SK-N-SH (cell line): ENCODE measurements at regions of chr2 and their contacts with region 1.

Region 1: DNA sequence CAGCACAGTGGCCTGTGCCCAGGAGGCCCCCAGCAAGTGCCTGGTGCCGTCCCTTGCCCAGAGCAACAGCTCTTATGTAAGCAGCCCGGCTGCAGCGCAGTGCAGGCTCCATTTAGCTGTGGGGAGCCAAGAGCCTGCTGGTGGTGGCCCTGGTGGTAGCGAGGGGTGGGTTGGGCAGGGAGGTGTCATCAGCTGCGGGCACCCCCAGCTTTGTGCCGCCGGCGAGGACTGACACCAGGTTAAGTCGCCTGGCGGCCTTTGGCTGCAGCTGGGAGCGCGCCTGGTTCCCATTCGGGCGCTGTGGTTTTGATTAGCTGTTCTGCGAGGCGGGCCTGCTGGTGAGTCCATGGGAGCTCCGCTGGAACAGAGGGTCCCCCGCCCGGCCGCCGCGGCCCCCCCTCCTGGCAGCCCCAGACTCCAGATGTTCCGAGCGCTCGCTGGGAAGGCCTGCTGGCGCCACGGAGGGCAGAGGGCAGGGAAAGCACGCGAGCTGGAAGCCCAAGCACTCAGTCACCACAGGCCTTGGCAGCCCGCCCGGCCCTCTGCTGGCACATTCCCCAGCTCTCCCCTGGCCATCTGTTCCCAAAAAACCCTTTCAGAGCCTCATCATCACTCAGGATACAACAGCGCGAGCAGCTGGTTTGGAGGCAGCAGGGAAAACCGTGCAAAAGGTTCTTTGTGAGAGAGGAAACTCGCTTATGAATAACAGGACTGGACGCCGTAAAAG is 18.4 kb downstream of the ATOH8 start:
- DNase-seq: peak; percentile 96
- H3K4me3 ChIP-seq: peak overlapping the region; percentile 28 to 55
- H3K27ac ChIP-seq: peak overlapping the region; percentile 96 to 99
- H3K4me1 ChIP-seq: peaks cover 63 to 70% of the 10 kb centered on the region in 2 experiments
- H3K27me3 ChIP-seq: no peaks in the 10 kb centered on the region
- CTCF ChIP-seq: peak; percentile 46
- EP300 ChIP-seq: peak; percentile 92 to 100
- RAD21 ChIP-seq: peak; percentile 53

Region 2: DNA sequence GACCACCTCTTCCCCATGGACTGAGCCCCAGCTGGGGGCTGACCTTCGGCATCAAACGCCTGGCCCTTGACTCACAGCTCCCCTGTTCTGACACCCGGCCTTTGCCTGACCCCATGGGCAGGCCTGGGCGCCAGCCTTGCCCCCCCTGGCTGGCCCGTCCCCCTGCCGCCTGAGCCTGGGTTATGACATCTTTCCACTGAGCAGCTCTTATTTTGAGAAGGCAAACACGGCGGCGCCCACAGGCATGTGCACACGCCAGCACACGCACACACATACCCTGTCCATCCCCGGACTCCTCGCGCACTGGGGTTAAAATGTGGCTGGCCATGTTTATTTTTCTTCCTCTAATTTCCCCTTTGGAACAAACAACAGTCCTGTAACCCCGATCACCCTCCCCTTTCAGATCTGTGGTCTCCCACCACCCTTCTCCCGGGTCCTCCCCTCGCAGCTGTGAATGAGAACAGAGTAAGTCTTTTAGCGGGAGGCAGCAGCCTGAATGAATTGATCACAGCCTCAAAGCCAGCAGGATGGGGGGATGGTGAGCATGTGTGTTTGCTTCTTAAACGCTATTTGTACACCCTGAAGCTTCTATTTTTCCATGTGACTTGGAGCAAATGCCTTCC is 30.2 kb before region 1 on chr2:
- CTCF ChIA-PET with region 1: interaction called, 10 read pairs
- POLR2A ChIA-PET with region 1: interaction called, 3 read pairs
- DNase-seq: peak; percentile 77
- H3K4me3 ChIP-seq: no peak overlapping the region
- H3K27ac ChIP-seq: peak overlapping the region; percentile 95 to 96
- H3K4me1 ChIP-seq: peaks cover 53 to 54% of the 10 kb centered on the region in 2 experiments
- H3K27me3 ChIP-seq: no peaks in the 10 kb centered on the region
- CTCF ChIP-seq: no peak
- EP300 ChIP-seq: peak in 1 of 2 experiments; percentile 81; a peak in 1 of 4 replicates
- RAD21 ChIP-seq: no peak

Region 3: DNA sequence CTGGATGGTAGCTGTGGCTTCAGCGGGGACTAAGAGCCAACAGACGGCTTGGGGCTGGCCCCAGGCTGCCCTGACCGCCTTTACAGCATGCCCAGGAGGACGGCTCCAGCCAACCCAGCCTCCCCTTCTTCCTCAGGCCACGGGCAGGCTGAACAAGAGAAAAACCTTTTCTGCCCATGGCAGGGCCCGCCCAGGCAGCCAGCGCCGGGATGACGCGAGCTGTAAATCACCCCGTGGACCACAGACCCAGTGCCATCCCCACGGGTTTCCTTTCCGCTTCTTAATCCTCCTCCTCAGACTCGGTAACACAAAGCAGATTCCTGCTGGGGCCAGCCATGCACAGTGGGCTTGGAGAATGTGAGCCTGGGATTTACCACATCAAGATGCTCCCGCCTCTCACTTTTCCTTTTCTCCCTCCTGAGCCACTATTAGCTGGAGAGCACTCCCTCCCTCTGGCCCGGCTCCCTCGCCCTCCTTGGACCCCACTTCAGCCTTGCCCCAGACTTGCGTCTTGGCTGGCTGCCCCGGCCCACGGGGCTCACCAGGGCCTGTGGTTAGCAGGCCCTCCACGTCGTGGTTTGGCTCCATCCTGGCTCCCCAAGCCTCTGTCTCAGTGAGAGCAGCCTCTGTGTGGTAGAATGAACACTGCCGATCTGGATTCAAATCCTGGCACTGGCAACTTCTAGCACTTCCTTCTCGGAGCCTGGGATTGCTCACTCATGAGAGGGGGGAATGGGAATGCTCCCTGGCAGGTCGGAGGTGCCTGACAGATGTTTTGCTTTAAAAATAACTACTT is 13.0 kb after region 1 on chr2:
- CTCF ChIA-PET with region 1: interaction called, 10 read pairs
- POLR2A ChIA-PET with region 1: no interaction called
- DNase-seq: no peak
- H3K4me3 ChIP-seq: no peak overlapping the region
- H3K27ac ChIP-seq: peak overlapping the region in 1 of 2 experiments; percentile 15; a peak in 1 of 4 replicates
- H3K4me1 ChIP-seq: peaks cover 7 to 13% of the 10 kb centered on the region in 2 experiments; a peak in 3 of 4 replicates
- H3K27me3 ChIP-seq: no peaks in the 10 kb centered on the region
- CTCF ChIP-seq: no peak
- EP300 ChIP-seq: peak in 1 of 2 experiments; percentile 78; a peak in 1 of 4 replicates
- RAD21 ChIP-seq: no peak

Region 4: DNA sequence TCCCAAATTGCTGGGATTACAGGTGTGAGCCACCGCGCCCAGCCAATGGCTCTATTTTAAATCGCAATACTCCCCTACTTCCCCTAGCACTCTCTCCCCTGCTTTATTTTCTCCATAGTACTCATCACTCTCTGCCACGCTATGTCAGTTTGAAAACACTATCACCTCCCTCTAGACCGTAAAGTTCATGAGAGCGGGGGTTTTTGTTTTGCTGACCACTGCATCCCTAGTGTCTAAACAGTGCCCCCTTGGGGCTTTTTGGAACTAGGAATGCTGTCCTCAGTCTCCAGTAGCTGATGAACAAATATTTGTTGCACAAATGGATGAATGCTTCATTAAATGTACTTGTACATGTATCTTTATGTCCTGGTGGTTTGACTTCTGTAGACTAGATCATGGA is 25.7 kb after region 1 on chr2:
- CTCF ChIA-PET with region 1: interaction called, 53 read pairs
- POLR2A ChIA-PET with region 1: interaction called, 3 read pairs
- DNase-seq: peak; percentile 72
- H3K4me3 ChIP-seq: no peak overlapping the region
- H3K27ac ChIP-seq: no peak overlapping the region
- H3K4me1 ChIP-seq: peaks cover 23 to 27% of the 10 kb centered on the region in 2 experiments; a peak in 3 of 4 replicates
- H3K27me3 ChIP-seq: no peaks in the 10 kb centered on the region
- CTCF ChIP-seq: peak; percentile 66
- EP300 ChIP-seq: no peak
- RAD21 ChIP-seq: peak; percentile 79

Region 5: GRCh38 chr2:85911814-85912692 is 139.9 kb after region 1 on chr2:
- CTCF ChIA-PET with region 1: no interaction called
- POLR2A ChIA-PET with region 1: no interaction called
- DNase-seq: no peak
- H3K4me3 ChIP-seq: no peak overlapping the region
- H3K27ac ChIP-seq: peak overlapping the region; percentile 23 to 87; a peak in 3 of 4 replicates
- H3K4me1 ChIP-seq: peaks cover 0 to 9% of the 10 kb centered on the region in 2 experiments; a peak in 1 of 4 replicates
- H3K27me3 ChIP-seq: no peaks in the 10 kb centered on the region
- CTCF ChIP-seq: no peak
- EP300 ChIP-seq: no peak
- RAD21 ChIP-seq: no peak

Region 6: DNA sequence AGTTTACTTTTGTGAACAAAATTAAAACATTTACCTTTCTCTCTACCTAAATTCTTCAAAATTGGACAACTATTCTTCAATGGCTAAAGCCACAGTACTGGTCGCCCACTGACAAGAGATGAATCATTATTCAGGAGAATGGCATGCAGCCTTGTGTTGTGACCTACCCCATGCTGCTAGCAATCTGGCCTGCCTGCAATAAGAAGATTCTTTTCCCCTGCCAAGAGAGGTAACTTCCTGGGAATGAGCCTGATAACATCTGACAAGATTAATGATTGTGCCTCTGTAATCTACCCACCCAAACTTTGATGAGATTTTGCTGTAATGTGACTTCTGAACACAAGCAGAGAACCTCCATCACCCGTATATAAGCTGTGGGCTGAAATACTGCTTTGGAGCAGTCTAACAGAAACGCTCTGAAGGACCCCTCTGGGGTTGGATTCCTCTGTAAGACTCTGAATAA is 163.6 kb after region 1 on chr2:
- CTCF ChIA-PET with region 1: no interaction called
- POLR2A ChIA-PET with region 1: no interaction called
- DNase-seq: no peak
- H3K4me3 ChIP-seq: no peak overlapping the region
- H3K27ac ChIP-seq: peak overlapping the region; percentile 68 to 77; a peak in 3 of 4 replicates
- H3K4me1 ChIP-seq: peaks cover 0 to 35% of the 10 kb centered on the region in 2 experiments; a peak in 1 of 4 replicates
- H3K27me3 ChIP-seq: no peaks in the 10 kb centered on the region
- CTCF ChIP-seq: no peak
- EP300 ChIP-seq: peak; percentile 50 to 96
- RAD21 ChIP-seq: no peak

Region 7: GRCh38 chr2:86135653-86136052 is 363.5 kb after region 1 on chr2:
- CTCF ChIA-PET with region 1: no interaction called
- POLR2A ChIA-PET with region 1: no interaction called
- DNase-seq: no peak
- H3K4me3 ChIP-seq: no peak overlapping the region
- H3K27ac ChIP-seq: no peak overlapping the region
- H3K4me1 ChIP-seq: no peaks in the 10 kb centered on the region
- H3K27me3 ChIP-seq: no peaks in the 10 kb centered on the region
- CTCF ChIP-seq: no peak
- EP300 ChIP-seq: no peak
- RAD21 ChIP-seq: no peak